Mammary epithelial cell (primary cell): ENCODE measurements at regions of chr1 and their contacts with region 1.

Region 1: GRCh38 chr1:208997726-208998312 is 585.7 kb upstream of the CAMK1G start:
- DNase-seq: no peak
- H3K4me3 ChIP-seq: no peak overlapping the region
- H3K27ac ChIP-seq: no peak overlapping the region
- H3K4me1 ChIP-seq: no peaks in the 10 kb centered on the region
- H3K27me3 ChIP-seq: no peaks in the 10 kb centered on the region
- CTCF ChIP-seq: peak; percentile 46 to 67

Region 2: GRCh38 chr1:208974717-208975116 is 23.1 kb before region 1 on chr1:
- CTCF ChIA-PET with region 1: no interaction called
- dilution Hi-C with region 1: no loop called
- in situ Hi-C with region 1: no loop called
- intact Hi-C with region 1: no loop called
- DNase-seq: no peak
- H3K4me3 ChIP-seq: no peak overlapping the region
- H3K27ac ChIP-seq: no peak overlapping the region
- H3K4me1 ChIP-seq: peaks cover 25% of the 10 kb centered on the region
- H3K27me3 ChIP-seq: no peaks in the 10 kb centered on the region
- CTCF ChIP-seq: no peak

Region 3: DNA sequence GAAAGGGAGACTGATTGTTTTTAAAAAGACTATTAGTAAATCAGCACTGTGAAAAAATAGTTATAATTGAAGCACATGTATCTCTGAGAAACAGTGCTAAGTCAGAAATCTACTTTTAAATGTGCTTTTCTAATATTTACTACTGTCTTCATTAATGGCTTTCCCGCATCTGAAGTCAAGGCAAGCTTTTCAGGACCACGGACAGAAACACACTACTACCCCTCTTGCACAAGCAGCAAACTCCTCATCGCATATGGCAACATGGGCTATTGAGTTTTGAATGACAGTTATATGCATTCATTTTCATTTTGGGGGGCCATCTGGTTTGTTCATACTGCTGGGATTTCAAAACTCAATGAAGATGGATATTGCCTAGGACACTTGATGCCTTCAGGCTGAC is 152.3 kb after region 1 on chr1:
- CTCF ChIA-PET with region 1: no interaction called
- dilution Hi-C with region 1: no loop called
- in situ Hi-C with region 1: no loop called
- intact Hi-C with region 1: no loop called
- DNase-seq: peak; percentile 44
- H3K4me3 ChIP-seq: no peak overlapping the region
- H3K27ac ChIP-seq: no peak overlapping the region
- H3K4me1 ChIP-seq: no peaks in the 10 kb centered on the region
- H3K27me3 ChIP-seq: no peaks in the 10 kb centered on the region
- CTCF ChIP-seq: no peak

Region 4: DNA sequence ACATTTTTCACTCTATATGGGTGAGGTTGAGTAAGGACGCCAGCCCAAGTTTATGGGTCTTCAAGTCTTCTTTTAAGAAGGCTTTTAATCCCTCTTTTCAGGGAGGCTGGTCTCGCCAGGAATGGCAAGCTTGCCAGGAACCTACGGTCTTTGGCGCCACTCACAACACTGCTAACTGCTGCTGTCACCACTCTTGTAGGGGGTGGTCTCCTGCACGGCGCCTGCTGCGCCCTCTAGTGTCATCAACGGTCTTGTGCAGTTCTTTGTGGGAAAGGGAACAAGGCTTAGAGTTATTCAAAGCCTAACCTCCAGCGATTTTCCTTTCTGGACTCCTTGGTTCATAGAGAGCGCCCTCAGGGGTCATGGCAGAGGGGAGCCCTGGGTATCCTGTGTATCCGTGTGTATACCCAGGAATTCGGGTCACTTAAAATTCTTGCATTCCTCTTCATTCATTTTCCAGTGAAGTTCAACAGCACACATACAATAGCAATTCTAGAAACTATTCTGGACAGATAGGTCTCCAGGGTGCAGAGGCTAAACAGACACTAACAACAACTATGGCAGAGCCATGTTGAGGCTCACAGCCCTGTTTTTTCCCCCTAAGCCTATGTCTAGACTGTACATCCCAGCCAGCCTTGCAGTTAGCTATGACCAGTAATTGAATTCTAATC is 192.9 kb after region 1 on chr1:
- CTCF ChIA-PET with region 1: no interaction called
- dilution Hi-C with region 1: no loop called
- in situ Hi-C with region 1: no loop called
- intact Hi-C with region 1: loop called (anchors 1 kb)
- DNase-seq: peak; percentile 43
- H3K4me3 ChIP-seq: no peak overlapping the region
- H3K27ac ChIP-seq: no peak overlapping the region
- H3K4me1 ChIP-seq: no peaks in the 10 kb centered on the region
- H3K27me3 ChIP-seq: no peaks in the 10 kb centered on the region
- CTCF ChIP-seq: peak; percentile 85 to 90